ENCODE measurements at regions of chr3 and their contacts with region 1.

Region 1: DNA sequence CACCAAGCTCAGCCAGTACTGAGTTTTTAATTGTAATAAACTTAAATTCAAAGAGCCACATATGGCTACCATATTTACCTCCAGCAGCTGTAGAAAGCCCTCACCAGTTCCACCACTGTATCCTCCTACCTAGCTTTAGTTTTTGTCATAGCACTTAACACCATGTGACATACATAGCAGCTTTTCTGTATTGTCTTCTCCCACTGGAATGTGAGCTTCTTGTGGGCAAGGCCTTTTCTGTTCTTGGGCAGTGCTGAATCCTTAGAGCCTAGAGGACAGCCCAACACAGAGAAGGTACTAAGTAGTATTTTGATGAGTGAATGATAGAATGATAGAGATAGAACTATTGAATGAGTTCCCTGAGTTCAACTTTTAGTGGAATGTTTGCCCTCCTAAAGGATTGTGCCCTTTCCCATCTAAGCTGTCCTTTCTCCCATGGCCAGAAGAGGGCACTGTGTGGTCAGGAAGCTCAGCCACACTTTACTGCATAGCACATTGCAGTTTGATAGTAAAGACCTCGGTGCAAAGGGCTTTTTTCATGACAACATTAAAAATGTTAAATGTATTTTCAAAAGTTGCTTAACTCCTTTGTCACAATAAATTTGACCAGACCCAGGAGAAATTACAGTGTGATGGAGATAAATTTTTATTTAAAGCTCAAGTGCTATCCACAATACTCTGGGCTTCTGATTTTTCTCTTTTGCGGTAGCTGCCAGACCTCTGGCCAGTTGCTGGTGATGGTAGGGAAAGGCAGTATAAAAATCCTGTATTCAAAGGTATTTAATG is 115.8 kb downstream of the GHSR start:
- DNase-seq: peak; percentile 65
- H3K4me3 Mint-ChIP-seq: no peak overlapping the region
- H3K27ac Mint-ChIP-seq: peak overlapping the region; percentile 58
- H3K4me1 Mint-ChIP-seq: peaks cover 4% of the 10 kb centered on the region
- H3K27me3 Mint-ChIP-seq: no peaks in the 10 kb centered on the region

Region 2: GRCh38 chr3:172039436-172040077 is 292.9 kb before region 1 on chr3 and contains the start of gene FNDC3B:
- CTCF ChIA-PET with region 1: interaction called, 11 read pairs
- DNase-seq: peak; percentile 95
- H3K4me3 Mint-ChIP-seq: peak within 1 kb of the TSS; percentile 96
- H3K27ac Mint-ChIP-seq: peak within 1 kb of the TSS; percentile 88
- H3K4me1 Mint-ChIP-seq: peaks cover 21% of the 10 kb centered on the region
- H3K27me3 Mint-ChIP-seq: peaks cover 26% of the 10 kb centered on the region

Region 3: GRCh38 chr3:172317984-172318383 is 14.5 kb before region 1 on chr3:
- CTCF ChIA-PET with region 1: interaction called, 16 read pairs
- DNase-seq: no peak
- H3K4me3 Mint-ChIP-seq: no peak overlapping the region
- H3K27ac Mint-ChIP-seq: no peak overlapping the region
- H3K4me1 Mint-ChIP-seq: no peaks in the 10 kb centered on the region
- H3K27me3 Mint-ChIP-seq: no peaks in the 10 kb centered on the region

Region 4: DNA sequence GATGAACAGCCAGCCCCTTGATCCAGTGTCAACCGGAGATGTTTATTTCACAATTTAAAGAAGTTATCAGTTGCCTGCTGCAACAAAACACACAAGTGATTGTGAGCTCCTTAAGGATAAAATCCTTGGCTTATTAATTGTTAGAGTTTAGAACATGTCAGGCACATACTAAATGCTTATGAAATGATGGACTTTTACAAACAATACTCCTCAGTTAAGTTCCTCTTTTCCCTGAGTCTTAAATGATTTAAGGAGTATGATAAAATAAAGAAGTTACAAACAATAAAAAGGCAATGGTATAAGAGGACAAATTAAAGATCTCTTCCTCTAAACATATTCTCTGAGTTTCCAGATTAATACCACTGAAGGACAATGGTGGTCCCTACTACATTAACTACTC is 110.2 kb after region 1 on chr3:
- CTCF ChIA-PET with region 1: no interaction called
- DNase-seq: no peak
- H3K4me3 Mint-ChIP-seq: no peak overlapping the region
- H3K27ac Mint-ChIP-seq: no peak overlapping the region
- H3K4me1 Mint-ChIP-seq: peaks cover 7% of the 10 kb centered on the region
- H3K27me3 Mint-ChIP-seq: peaks cover 47% of the 10 kb centered on the region

Region 5: DNA sequence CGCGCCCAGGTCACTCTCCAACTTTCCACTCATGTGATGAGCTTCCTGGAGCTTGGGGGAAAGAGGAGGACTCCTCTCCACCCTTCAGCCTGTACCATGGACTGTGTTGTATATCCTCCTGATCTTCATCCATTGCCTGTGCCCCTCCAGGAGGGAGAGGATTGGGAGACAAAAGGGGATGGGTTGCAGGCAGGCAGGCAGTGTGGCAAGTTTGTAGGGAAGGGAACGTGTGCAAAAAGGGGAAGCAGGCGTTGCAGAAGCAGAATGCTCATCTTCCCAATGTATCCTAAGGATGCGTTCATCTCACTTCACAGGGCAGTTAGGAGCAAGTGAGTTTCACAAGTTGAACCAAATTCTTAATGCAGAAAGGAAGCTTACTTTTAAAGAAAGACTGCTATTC is 143.9 kb after region 1 on chr3:
- CTCF ChIA-PET with region 1: interaction called, 11 read pairs
- DNase-seq: no peak
- H3K4me3 Mint-ChIP-seq: peak overlapping the region; percentile 11
- H3K27ac Mint-ChIP-seq: no peak overlapping the region
- H3K4me1 Mint-ChIP-seq: peaks cover 11% of the 10 kb centered on the region
- H3K27me3 Mint-ChIP-seq: peaks cover 8% of the 10 kb centered on the region

Region 6: GRCh38 chr3:172666873-172667694 is 334.6 kb after region 1 on chr3:
- CTCF ChIA-PET with region 1: interaction called, 115 read pairs
- DNase-seq: peak; percentile 87
- H3K4me3 Mint-ChIP-seq: no peak overlapping the region
- H3K27ac Mint-ChIP-seq: no peak overlapping the region
- H3K4me1 Mint-ChIP-seq: peaks cover 23% of the 10 kb centered on the region
- H3K27me3 Mint-ChIP-seq: peaks cover 11% of the 10 kb centered on the region

Region 7: DNA sequence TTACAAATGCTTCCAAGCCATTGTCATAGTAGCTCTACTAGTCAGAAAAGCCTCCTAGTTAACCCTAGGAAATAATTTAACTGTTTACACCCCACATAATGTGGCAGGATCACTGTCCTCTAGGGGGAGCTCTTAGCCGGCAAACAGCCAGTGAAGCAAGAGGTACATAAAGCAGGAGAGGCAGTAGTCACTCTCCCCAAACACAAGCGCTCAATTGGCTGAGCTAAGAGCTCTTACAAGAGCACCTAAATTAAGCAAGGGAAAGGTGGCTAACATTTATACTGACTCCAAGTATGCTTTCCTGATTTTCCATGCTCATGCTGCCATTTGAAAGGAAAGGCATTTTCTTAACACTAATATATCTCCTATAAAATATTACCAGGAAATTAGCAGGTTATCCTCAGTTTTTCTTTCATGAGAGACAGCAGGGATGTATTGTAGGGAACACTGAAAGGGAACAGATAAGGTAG is 340.8 kb after region 1 on chr3:
- CTCF ChIA-PET with region 1: interaction called, 115 read pairs
- DNase-seq: peak; percentile 78
- H3K4me3 Mint-ChIP-seq: no peak overlapping the region
- H3K27ac Mint-ChIP-seq: no peak overlapping the region
- H3K4me1 Mint-ChIP-seq: peaks cover 7% of the 10 kb centered on the region
- H3K27me3 Mint-ChIP-seq: no peaks in the 10 kb centered on the region